Activated CD4-positive, alpha-beta T cell treated with anti-CD3 and anti-CD28 coated beads, Interleukin-2, amount 10 ng/mL, durations not matched to agents 24 days and 14 days (primary cell): ENCODE measurements at regions of chr21 and their contacts with region 1.

Region 1: GRCh38 chr21:14487490-14488432 is 58.4 kb downstream of the SAMSN1 start:
- DNase-seq: no peak
- H3K4me3 Mint-ChIP-seq: peak overlapping the region; percentile 28
- H3K27ac Mint-ChIP-seq: peak overlapping the region; percentile 87
- H3K4me1 Mint-ChIP-seq: peaks cover 60% of the 10 kb centered on the region
- H3K27me3 Mint-ChIP-seq: no peaks in the 10 kb centered on the region

Region 2: GRCh38 chr21:14454016-14455009 is 33.4 kb before region 1 on chr21:
- intact Hi-C with region 1: loop called (anchors 2 kb)
- DNase-seq: peak; percentile 61
- H3K4me3 Mint-ChIP-seq: peak overlapping the region; percentile 40
- H3K27ac Mint-ChIP-seq: peak overlapping the region; percentile 87
- H3K4me1 Mint-ChIP-seq: peaks cover 52% of the 10 kb centered on the region
- H3K27me3 Mint-ChIP-seq: no peaks in the 10 kb centered on the region

Region 3: GRCh38 chr21:14497825-14498224 is 10.1 kb after region 1 on chr21:
- intact Hi-C with region 1: loop called (anchors 2 kb)
- DNase-seq: no peak
- H3K4me3 Mint-ChIP-seq: no peak overlapping the region
- H3K27ac Mint-ChIP-seq: no peak overlapping the region
- H3K4me1 Mint-ChIP-seq: peaks cover 37% of the 10 kb centered on the region
- H3K27me3 Mint-ChIP-seq: no peaks in the 10 kb centered on the region

Region 4: DNA sequence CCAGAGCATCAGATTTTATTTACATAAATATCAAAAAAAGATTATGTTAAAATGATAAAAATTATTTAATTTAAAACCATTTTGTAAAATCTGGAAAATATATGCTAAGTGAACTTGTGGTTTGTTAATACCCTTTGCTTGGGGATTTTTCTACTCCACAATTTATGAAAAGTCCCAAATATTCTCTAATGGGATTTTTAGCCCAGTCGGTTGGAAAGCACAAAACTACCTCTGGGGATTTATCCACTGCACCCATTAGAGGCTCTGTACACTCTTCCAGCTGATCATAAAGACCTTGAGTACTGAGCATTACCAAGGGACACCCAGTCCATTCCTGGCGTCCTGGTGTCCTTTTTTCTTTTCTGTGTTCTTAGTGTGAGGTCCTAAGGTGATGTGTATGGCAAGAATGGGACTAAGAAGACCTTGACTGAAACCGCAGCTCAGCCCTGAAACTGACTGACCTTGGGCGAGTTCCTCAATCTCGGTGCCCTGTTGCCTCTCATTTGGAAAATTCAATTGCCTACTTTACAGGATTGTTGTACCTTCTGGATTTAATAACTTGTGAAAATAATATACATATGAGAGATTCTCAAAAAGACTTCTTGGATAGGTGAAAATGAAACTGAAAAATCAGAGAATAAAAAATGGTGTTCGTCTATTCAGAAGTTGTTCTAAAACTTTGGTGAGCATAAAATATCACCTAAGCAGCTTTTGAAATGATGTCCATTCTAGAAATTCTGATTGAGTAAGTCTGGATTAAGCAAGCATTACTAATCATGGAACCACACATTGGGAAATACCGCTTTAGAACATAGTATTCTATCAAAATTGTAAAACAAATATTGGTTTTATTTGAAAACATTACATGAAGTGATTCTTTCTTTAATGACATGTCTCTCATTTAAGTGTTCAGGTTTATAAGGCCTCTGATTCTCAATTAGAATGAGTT is 79.8 kb after region 1 on chr21:
- intact Hi-C with region 1: no loop called
- DNase-seq: no peak
- H3K4me3 Mint-ChIP-seq: no peak overlapping the region
- H3K27ac Mint-ChIP-seq: peak overlapping the region; percentile 14
- H3K4me1 Mint-ChIP-seq: peaks cover 37% of the 10 kb centered on the region
- H3K27me3 Mint-ChIP-seq: no peaks in the 10 kb centered on the region